Calu3 (cell line): ENCODE measurements at regions of chr19 and their contacts with region 1.

Region 1: GRCh38 chr19:39970675-39971379 is at the start of gene PSMC4:
- DNase-seq: peak; percentile 100
- H3K4me3 Mint-ChIP-seq: peak within 1 kb of the TSS; percentile 99
- H3K27ac Mint-ChIP-seq: peak within 1 kb of the TSS; percentile 87
- H3K4me1 Mint-ChIP-seq: peaks cover 39% of the 10 kb centered on the region
- H3K27me3 Mint-ChIP-seq: no peaks in the 10 kb centered on the region
- CTCF ChIP-seq: peak; percentile 77
- total RNA-seq, gene PSMC4: 300 and 316 TPM in 2 replicates

Region 2: GRCh38 chr19:39846176-39846677 is 124.6 kb before region 1 on chr19 and contains the start of gene FBL:
- CTCF ChIA-PET with region 1: interaction called, 34 read pairs
- intact Hi-C with region 1: loop called (anchors 2 kb)
- DNase-seq: peak; percentile 98
- H3K4me3 Mint-ChIP-seq: peak within 1 kb of the TSS; percentile 82
- H3K27ac Mint-ChIP-seq: peak within 1 kb of the TSS; percentile 85
- H3K4me1 Mint-ChIP-seq: peaks cover 44% of the 10 kb centered on the region
- H3K27me3 Mint-ChIP-seq: no peaks in the 10 kb centered on the region
- CTCF ChIP-seq: no peak
- total RNA-seq, gene FBL: 641 and 724 TPM in 2 replicates

Region 3: DNA sequence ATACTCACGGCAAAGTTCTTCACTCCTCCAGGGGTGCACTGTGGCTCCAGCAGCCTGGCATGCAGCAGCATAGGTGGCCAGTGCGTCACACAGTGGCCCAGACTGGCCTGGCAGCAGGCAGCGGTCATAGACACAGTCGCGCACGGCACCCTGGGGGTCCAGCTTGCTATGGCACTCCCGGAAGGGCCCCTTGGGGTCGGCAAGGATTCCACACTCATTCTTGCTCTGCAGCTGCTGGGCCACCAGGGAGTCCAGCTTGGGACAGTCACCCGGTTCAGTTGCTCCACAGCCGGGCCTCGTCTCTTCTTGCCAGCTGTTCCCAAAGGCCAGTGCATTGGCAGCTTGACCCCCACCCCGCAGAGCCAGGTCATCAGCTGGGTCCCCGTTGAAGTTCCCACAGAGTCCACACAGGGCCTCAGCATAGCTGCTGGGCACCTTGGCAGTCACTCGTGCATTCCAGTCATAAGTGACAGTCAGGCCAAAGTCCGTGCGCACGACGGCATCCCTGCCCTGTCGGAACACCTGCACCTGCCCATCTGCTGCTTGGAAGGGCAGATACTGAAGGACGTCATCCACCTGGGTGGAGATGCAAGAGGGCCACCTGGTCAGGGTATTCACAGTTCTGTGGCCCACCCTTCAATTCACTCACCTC is 57.0 kb before region 1 on chr19:
- CTCF ChIA-PET with region 1: no interaction called
- intact Hi-C with region 1: loop called (anchors 5 kb)
- DNase-seq: no peak
- H3K4me3 Mint-ChIP-seq: no peak overlapping the region
- H3K27ac Mint-ChIP-seq: no peak overlapping the region
- H3K4me1 Mint-ChIP-seq: no peaks in the 10 kb centered on the region
- H3K27me3 Mint-ChIP-seq: no peaks in the 10 kb centered on the region
- CTCF ChIP-seq: no peak

Region 4: GRCh38 chr19:39953915-39954314 is 16.9 kb before region 1 on chr19:
- CTCF ChIA-PET with region 1: interaction called, 14 read pairs
- intact Hi-C with region 1: no loop called
- DNase-seq: no peak
- H3K4me3 Mint-ChIP-seq: no peak overlapping the region
- H3K27ac Mint-ChIP-seq: no peak overlapping the region
- H3K4me1 Mint-ChIP-seq: peaks cover 39% of the 10 kb centered on the region
- H3K27me3 Mint-ChIP-seq: no peaks in the 10 kb centered on the region
- CTCF ChIP-seq: no peak

Region 5: GRCh38 chr19:40033989-40034560 is 63.2 kb after region 1 on chr19:
- CTCF ChIA-PET with region 1: no interaction called
- intact Hi-C with region 1: no loop called
- DNase-seq: no peak
- H3K4me3 Mint-ChIP-seq: no peak overlapping the region
- H3K27ac Mint-ChIP-seq: no peak overlapping the region
- H3K4me1 Mint-ChIP-seq: no peaks in the 10 kb centered on the region
- H3K27me3 Mint-ChIP-seq: no peaks in the 10 kb centered on the region
- CTCF ChIP-seq: no peak

Region 6: DNA sequence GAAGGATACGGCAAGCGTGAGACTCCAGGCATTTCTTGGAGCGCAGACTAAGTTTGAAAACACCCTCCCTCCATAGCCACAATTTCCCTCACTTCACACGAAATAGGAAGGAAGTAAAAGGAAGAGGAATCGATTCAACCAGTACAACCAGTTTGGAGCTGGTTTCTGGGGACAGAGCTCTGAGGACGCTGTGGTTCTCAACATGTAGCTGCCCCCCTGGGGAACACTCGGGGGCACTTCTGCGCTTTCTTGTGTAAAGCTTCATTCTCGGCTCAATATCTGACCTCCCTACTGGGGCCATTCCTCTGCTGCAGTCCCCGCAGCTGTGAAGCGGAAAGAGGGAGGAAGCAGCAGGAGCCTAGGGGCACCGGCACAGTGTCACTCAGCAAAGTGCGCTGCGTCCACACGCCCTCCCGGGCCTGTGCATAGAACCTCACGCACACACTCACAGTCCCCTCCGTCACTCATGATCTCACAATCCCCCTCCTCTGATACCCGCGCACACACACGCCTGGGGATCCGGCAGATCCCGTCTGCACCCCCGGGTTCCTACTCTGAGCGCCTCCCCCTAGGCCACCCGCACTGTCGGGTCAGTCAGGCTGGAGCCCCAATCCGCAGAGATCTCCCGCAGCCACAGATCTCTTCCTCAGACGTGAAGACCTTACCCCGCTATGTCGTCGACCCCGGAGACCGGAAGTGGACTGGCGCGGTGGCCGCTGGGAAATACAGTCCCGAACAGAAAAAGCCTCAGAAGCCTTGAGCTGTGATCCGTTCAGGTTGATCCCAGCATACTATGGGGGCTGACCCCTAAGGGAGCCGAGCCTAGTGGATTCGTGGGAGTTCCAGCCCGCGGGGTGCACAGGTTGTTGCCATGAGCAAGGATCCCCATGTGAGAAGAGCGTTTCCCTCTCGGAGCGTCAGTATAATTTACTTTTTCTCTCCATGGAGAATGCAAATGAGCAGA is 119.7 kb after region 1 on chr19 and contains the start of gene ZNF780A:
- CTCF ChIA-PET with region 1: interaction called, 14 read pairs
- intact Hi-C with region 1: no loop called
- DNase-seq: peak; percentile 84
- H3K4me3 Mint-ChIP-seq: peak within 1 kb of the TSS; percentile 95
- H3K27ac Mint-ChIP-seq: peak within 1 kb of the TSS; percentile 97
- H3K4me1 Mint-ChIP-seq: peaks cover 17% of the 10 kb centered on the region
- H3K27me3 Mint-ChIP-seq: no peaks in the 10 kb centered on the region
- CTCF ChIP-seq: no peak
- total RNA-seq, gene ZNF780A: 32.6 and 34.2 TPM in 2 replicates